Right ventricle myocardium inferior (tissue), 1 donor: ENCODE measurements at regions of chr2 and their contacts with region 1.

Region 1: GRCh38 chr2:74334931-74335333 is 8.3 kb downstream of the SLC4A5 start:
- DNase-seq: peak; percentile 78
- ATAC-seq: peak; percentile 80

Region 2: DNA sequence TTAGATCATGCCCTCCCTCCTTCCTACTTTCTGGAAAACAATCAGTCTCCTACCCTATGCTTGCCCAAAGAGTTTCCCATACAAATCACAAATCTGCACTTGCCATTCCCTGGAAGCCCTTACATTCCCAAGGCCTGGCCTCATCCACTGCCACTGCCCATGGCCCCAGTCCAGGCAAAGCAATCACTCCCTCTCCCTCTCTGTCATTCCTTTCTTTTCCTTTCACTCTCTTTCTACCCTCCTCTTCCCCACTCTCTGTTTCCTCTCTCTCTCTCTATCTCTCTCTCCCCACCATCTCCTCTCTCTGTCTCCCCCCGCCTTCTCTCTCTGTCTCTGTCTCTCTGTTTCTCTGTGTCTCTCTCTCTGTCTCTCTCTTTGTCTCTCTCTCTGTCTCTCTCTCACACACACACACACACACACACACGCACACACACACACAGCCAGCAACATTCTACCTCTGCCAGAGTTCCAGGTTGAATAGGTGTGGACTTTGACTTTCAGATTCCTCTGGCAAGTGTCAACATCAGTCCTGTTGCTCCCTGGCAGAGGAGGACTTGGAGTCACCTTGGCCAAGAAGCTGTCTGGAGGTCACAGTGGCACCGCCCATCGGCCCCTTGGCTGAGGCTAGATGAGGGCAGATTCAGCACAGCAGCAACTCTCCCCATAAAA is 649.0 kb before region 1 on chr2:
- intact Hi-C with region 1: loop called (anchors 10 kb)
- DNase-seq: no peak
- ATAC-seq: peak; percentile 43

Region 3: GRCh38 chr2:74250189-74250631 is 84.7 kb before region 1 on chr2:
- intact Hi-C with region 1: loop called (anchors 5 kb)
- DNase-seq: no peak
- ATAC-seq: no peak

Region 4: DNA sequence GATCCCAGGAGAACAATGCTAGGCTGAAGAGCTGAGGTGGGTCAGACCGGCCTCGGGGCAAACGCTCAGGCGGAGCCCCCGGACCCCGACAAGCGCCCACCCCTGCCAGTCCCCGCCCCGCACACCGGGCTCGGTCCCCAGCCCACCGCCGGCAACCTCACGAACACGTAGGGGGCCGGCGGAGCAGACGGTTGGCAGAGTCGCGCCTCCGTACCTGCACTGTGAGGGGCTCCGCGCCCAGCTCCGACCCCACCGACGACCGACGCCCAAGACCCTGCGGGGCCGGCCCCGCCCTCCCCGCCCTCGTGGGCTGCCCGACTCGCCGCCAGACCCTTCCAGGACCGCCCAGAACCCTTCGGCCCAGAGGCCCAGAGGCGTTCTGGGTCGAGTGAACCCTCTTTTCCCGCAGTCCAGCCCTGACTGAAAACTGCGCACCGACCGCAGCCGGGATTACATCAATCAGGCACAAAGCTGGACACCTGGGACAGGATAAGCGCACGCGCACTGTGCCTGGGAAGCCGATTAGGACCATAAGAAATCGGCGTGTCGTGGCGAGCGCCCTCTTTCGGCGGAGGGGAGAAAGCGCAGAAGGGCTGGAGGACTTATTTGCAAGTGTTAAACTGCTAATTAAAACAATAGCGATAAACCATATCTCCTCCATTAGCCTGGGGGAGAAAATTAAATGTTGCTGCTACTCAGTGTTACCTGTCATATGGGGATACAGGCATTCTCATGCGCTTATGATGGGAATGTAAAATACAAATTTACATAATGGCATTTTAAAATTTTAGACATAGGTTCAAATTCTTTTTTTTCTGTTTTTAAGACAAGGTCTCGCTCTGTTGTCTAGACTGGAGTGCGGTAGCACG is 56.9 kb after region 1 on chr2:
- intact Hi-C with region 1: loop called (anchors 5 kb)
- DNase-seq: peak; percentile 97
- ATAC-seq: peak; percentile 86

Region 5: DNA sequence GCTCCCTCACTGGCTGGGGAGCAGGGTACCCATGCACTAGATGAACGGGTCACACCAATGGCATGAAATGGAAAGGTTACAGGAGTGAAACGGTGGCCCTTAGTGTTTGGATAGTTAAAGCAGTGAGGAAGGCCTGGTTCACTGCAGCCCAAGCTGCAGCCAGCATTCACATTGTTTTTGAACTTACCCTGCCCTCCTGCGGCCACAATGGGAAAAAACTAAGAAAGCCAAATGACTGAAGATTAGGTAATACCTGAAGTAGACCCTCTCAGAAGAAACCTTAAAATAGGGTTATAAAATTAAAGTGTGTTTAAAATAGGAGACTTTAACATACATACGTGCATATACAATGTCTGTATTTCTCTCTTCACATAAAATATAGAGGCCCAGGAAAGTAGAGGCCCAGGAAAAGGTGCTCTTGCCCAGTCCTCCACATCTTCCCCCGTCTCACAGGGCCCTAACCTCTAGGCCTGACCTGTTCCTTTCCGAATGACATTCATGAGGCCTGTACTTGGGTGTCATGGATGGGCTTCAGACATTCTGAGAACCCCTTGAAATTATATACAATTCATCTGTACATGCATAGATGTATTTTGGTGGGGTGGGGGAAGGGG is 252.8 kb after region 1 on chr2:
- intact Hi-C with region 1: loop called (anchors 5 kb)
- DNase-seq: peak; percentile 64
- ATAC-seq: peak; percentile 87